AG04449 (cell line): ENCODE measurements at regions of chr1 and their contacts with region 1.

Region 1: GRCh38 chr1:164786980-164787833 is 228.2 kb downstream of the PBX1 start:
- DNase-seq: no peak
- H3K4me3 ChIP-seq: no peak overlapping the region
- CTCF ChIP-seq: peak; percentile 95

Region 2: GRCh38 chr1:164558461-164559341 is 228.5 kb before region 1 on chr1 and contains the start of gene PBX1:
- CTCF ChIA-PET with region 1: interaction called, 11 read pairs
- POLR2A ChIA-PET with region 1: no interaction called
- DNase-seq: peak; percentile 87
- H3K4me3 ChIP-seq: peak within 1 kb of the TSS; percentile 69
- CTCF ChIP-seq: no peak

Region 3: GRCh38 chr1:164617377-164618201 is 169.6 kb before region 1 on chr1:
- CTCF ChIA-PET with region 1: interaction called, 50 read pairs
- POLR2A ChIA-PET with region 1: no interaction called
- DNase-seq: no peak
- H3K4me3 ChIP-seq: no peak overlapping the region
- CTCF ChIP-seq: peak; percentile 60

Region 4: DNA sequence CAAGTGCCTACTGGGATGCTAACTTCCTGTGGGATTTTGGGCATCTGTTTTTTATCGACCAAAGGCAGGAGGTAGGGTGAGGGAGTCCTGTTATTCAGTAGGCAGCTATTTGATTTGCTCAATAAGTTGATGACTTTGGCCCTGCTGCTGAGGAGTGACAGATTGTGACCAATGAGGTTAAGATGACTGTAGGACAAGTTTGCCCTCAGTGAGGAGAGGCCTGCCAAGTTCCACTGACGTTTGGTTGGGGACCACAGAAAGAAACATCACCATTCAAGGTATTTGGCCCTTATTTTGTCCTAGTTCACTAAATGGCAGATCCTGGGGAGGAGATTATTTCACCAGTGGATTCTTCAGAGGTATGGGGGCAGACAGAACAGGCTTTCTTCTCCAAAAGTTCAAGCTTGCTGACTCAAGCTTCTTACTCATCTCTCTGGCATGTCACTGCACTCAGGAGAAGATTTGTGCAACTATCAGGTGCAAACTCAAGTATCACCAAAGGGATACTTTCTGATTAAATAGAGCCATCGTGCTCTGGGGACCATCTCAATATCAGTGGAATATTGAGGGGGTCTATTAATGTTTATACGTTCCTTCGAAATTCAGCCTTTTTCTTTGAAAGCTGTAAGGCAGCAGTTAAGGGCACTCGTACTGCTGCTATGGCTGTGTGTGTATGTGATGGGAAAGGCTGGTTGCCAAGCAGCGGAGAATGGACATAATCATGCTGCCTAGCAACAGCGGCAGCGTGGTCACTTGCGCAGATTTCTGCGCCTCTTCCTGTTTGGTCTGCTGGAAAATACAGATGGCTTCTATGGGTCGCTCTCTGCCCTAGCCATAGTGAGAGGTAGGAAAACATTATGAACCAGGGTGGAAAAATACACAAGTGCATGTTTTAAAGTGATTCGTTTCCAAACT is 149.5 kb before region 1 on chr1:
- CTCF ChIA-PET with region 1: interaction called, 16 read pairs
- POLR2A ChIA-PET with region 1: no interaction called
- DNase-seq: no peak
- H3K4me3 ChIP-seq: no peak overlapping the region
- CTCF ChIP-seq: no peak

Region 5: DNA sequence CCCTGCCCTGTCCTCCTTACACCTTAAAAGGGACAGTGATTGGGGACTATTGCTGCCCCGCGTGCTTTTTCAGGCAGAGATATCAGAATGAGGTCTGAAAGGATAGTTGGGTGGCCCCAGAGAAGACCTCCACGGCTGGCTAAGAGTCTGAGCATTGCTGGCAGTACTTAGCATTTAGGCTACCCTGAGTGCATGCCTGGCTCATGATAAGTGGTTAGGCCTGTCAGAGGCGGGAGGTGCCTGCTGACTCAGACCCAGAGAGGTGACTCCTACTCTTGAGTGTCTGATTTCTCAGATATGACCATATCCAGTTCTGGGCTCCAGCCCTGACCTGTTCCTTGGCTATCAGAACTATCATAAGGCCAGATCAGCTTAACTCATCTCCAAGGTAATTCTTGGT is 14.6 kb before region 1 on chr1:
- CTCF ChIA-PET with region 1: interaction called, 57 read pairs
- POLR2A ChIA-PET with region 1: interaction called, 3 read pairs
- DNase-seq: peak; percentile 73
- H3K4me3 ChIP-seq: no peak overlapping the region
- CTCF ChIP-seq: no peak